ENCODE measurements at regions of chr6 and their contacts with region 1.

Region 1: GRCh38 chr6:30616811-30617564 is at the start of gene PPP1R10:
- DNase-seq: peak; percentile 100
- ATAC-seq: peak; percentile 79 to 81
- H3K4me3 ChIP-seq: peak within 1 kb of the TSS; percentile 71 to 89 (median 82)
- H3K27ac ChIP-seq: peak within 1 kb of the TSS; percentile 95 to 99 (median 98)
- H3K4me1 ChIP-seq: peaks cover 34 to 40% of the 10 kb centered on the region in 2 donors
- H3K27me3 ChIP-seq: no peaks in the 10 kb centered on the region
- CTCF ChIP-seq: no peak
- POLR2A ChIP-seq: peak; percentile 100
- total RNA-seq, gene PPP1R10: 24.1 to 31.5 (median 27.0) TPM

Region 2: GRCh38 chr6:30044630-30045029 is 572.4 kb before region 1 on chr6:
- in situ Hi-C with region 1: no loop called
- intact Hi-C with region 1: no loop called
- DNase-seq: no peak
- ATAC-seq: no peak
- H3K4me3 ChIP-seq: no peak overlapping the region
- H3K27ac ChIP-seq: no peak overlapping the region
- H3K4me1 ChIP-seq: peaks cover 0 to 10% of the 10 kb centered on the region in 2 donors
- H3K27me3 ChIP-seq: no peaks in the 10 kb centered on the region
- CTCF ChIP-seq: no peak
- POLR2A ChIP-seq: no peak

Region 3: GRCh38 chr6:30489081-30490025 is 127.6 kb before region 1 on chr6 and contains the start of gene HLA-E:
- in situ Hi-C with region 1: no loop called
- intact Hi-C with region 1: loop called (anchors 5 kb)
- DNase-seq: peak; percentile 91
- ATAC-seq: peak; percentile 100
- H3K4me3 ChIP-seq: peak within 1 kb of the TSS; percentile 55 to 91 (median 76)
- H3K27ac ChIP-seq: peak within 1 kb of the TSS; percentile 77 to 95 (median 86)
- H3K4me1 ChIP-seq: peaks cover 0 to 3% of the 10 kb centered on the region in 2 donors
- H3K27me3 ChIP-seq: peaks cover 5 to 10% (median 9%) of the 10 kb centered on the region in 3 donors
- CTCF ChIP-seq: no peak
- POLR2A ChIP-seq: peak; percentile 83 to 92
- total RNA-seq, gene HLA-E: 135 to 248 (median 157) TPM

Region 4: DNA sequence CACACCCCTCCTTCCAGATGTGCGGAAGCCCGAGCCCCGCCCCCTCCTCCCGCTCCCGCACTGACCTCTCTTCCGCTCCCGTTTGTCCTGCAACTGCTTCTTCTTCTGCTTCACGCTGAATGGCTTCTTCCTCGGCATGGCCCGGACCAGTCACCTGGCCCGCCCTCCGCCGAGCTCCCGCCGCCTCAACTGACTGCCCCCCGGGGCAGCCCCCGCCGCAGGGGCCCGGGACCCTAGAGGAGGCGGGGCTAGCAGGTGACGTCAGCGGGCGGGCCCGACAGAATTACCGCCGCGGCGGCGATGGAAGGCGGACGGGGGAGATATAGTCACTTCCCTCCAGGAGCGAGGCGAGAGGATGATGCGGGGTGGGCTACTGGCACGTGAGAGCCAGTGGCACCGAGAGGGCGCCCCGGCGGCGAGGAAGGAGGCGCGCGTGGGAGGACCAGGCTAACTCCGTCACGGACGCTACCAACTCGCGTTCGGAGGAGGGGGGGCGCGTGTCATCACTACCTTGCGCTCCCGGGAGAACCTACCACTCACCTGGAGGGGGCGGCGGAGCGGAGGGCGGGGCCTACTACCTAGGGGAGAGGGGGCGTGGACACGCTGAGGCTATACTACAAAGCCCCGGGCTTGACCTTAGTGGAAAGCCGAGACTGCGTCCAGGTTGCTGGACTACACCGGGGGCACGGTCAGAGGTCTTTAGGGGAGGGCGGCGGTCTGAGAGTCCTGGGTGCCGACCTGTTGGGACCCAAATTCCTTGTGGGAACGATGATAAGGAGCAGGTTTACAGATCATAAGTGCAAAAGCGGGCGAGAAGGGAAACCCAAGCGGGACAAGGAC is 60.7 kb before region 1 on chr6 and contains the start of gene GNL1:
- in situ Hi-C with region 1: no loop called
- intact Hi-C with region 1: loop called (anchors 1 kb)
- DNase-seq: peak; percentile 80 to 92
- ATAC-seq: peak; percentile 77 to 79
- H3K4me3 ChIP-seq: peak within 1 kb of the TSS; percentile 87 to 99 (median 96)
- H3K27ac ChIP-seq: peak within 1 kb of the TSS; percentile 91 to 99 (median 95)
- H3K4me1 ChIP-seq: peaks cover 11 to 18% of the 10 kb centered on the region in 2 donors
- H3K27me3 ChIP-seq: no peaks in the 10 kb centered on the region
- CTCF ChIP-seq: peak in 1 of 5 experiments; percentile 15
- POLR2A ChIP-seq: peak; percentile 34 to 38
- total RNA-seq, gene GNL1: 13.2 to 16.0 (median 14.9) TPM

Region 5: DNA sequence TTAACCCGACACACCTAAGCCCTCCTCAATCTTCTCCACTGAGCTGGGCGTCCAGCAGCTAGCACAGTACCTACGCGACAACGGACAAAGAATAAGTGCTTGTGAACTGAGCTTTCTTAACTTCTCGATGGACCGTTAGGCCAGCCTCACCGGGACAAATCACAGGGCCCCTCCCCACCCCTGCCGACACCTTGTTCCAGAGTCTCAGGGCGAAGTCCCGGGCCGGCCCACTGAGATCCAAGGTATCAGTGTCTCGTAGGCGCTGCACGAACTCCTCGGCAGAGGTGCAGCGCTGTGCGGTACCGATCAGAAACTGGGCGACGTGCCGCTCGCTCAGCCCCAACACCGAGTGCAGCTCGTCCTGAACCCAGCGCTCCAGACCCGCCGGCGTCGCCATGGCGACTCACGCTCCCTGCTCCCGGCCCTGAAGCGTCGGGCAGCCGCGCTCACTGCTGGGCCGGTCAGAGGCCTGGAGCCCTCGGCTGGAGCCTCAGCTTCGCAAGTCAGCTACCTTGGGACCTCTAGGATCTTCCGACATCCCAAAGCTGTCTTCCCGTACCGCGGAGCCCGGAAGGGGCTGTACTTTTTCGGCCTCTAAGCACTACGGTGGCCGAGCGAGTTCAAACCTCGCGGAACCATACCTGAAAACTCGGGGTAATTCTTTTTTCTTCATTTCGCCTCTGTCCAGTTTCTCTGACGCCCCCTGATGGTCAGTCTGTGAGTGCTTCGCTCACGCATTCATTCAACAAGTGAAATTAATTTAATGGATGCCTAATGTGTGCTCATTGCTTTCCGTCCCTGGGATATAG is 55.7 kb after region 1 on chr6 and contains the start of gene DHX16:
- in situ Hi-C with region 1: no loop called
- intact Hi-C with region 1: loop called (anchors 5 kb)
- DNase-seq: peak; percentile 91 to 96
- ATAC-seq: peak; percentile 90 to 94
- H3K4me3 ChIP-seq: peak within 1 kb of the TSS; percentile 78 to 95 (median 91)
- H3K27ac ChIP-seq: peak within 1 kb of the TSS; percentile 78 to 88 (median 82)
- H3K4me1 ChIP-seq: peaks cover 15 to 18% of the 10 kb centered on the region in 2 donors
- H3K27me3 ChIP-seq: no peaks in the 10 kb centered on the region
- CTCF ChIP-seq: peak; percentile 65 to 89 (median 86)
- POLR2A ChIP-seq: peak in 1 of 2 donors; percentile 30
- total RNA-seq, gene DHX16: 39.1 to 74.8 (median 49.4) TPM

Region 6: GRCh38 chr6:31541658-31542521 is 924.9 kb after region 1 on chr6 and contains the start of gene DDX39B:
- in situ Hi-C with region 1: no loop called
- intact Hi-C with region 1: loop called (anchors 5 kb)
- DNase-seq: peak; percentile 96 to 97
- ATAC-seq: peak; percentile 94 to 95
- H3K4me3 ChIP-seq: peak within 1 kb of the TSS; percentile 81 to 91 (median 85)
- H3K27ac ChIP-seq: peak within 1 kb of the TSS; percentile 96 to 98 (median 96)
- H3K4me1 ChIP-seq: peaks cover 31 to 38% of the 10 kb centered on the region in 2 donors
- H3K27me3 ChIP-seq: no peaks in the 10 kb centered on the region
- CTCF ChIP-seq: no peak
- POLR2A ChIP-seq: peak; percentile 72 to 77
- total RNA-seq, gene DDX39B: 107 to 198 (median 144) TPM

Region 7: DNA sequence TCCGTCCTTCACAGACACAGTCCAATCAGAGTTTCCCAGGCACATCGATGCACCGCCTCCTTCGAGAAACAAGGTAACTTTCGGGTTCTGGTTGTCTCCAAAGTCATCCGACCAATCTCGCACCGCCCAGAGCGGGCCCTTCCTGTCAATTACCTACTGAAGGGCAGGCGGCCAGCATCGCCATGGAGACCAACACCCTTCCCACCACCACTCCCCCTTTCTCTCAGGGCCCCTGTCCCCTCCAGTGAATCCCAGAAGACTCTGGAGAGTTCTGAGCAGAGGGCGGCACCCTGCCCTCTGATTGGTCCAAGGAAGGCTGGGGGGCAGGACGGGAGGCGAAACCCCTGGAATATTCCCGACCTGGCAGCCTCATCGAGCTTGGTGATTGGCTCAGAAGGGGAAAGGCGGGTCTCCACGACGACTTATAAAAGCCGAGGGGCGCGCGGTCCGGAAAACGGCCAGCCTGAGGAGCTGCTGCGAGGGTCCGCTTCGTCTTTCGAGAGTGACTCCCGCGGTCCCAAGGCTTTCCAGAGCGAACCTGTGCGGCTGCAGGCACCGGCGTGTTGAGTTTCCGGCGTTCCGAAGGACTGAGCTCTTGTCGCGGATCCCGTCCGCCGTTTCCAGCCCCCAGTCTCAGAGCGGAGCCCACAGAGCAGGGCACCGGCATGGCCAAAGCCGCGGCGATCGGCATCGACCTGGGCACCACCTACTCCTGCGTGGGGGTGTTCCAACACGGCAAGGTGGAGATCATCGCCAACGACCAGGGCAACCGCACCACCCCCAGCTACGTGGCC is 1210.5 kb after region 1 on chr6 and contains the start of gene HSPA1B:
- in situ Hi-C with region 1: no loop called
- intact Hi-C with region 1: loop called (anchors 10 kb)
- DNase-seq: peak; percentile 100
- ATAC-seq: peak; percentile 79 to 80
- H3K4me3 ChIP-seq: peak within 1 kb of the TSS; percentile 73 to 92 (median 76)
- H3K27ac ChIP-seq: peak within 1 kb of the TSS; percentile 97 to 98 (median 97)
- H3K4me1 ChIP-seq: peaks cover 37 to 39% of the 10 kb centered on the region in 2 donors
- H3K27me3 ChIP-seq: no peaks in the 10 kb centered on the region
- CTCF ChIP-seq: peak in 2 of 5 experiments; percentile 16 to 17
- POLR2A ChIP-seq: peak; percentile 100
- total RNA-seq, gene HSPA1B: 71.5 to 178 (median 112) TPM

Measured in gastrocnemius medialis (tissue), 4 donors.